ENCODE measurements at regions of chr5 and their contacts with region 1.

Region 1: GRCh38 chr5:149485655-149486425 is 65.4 kb downstream of the CSNK1A1 start:
- DNase-seq: peak; percentile 100
- ATAC-seq: peak; percentile 74
- H3K4me3 ChIP-seq: no peak overlapping the region
- H3K27ac ChIP-seq: peak overlapping the region; percentile 84
- H3K4me1 ChIP-seq: peaks cover 31% of the 10 kb centered on the region
- H3K27me3 ChIP-seq: no peaks in the 10 kb centered on the region
- CTCF ChIP-seq: no peak
- POLR2A ChIP-seq: no peak
- RAD21 ChIP-seq: peak; percentile 8; the same call in 1 of the 2 replicates

Region 2: GRCh38 chr5:149448831-149449714 is 36.8 kb before region 1 on chr5:
- CTCF ChIA-PET with region 1: interaction called, 5 read pairs
- POLR2A ChIA-PET with region 1: interaction called, 3 read pairs
- dilution Hi-C with region 1: no loop called
- in situ Hi-C with region 1: loop called (anchors 5 kb)
- intact Hi-C with region 1: loop called (anchors 1 kb)
- DNase-seq: no peak
- ATAC-seq: no peak
- H3K4me3 ChIP-seq: no peak overlapping the region
- H3K27ac ChIP-seq: peak overlapping the region; percentile 90
- H3K4me1 ChIP-seq: peaks cover 41% of the 10 kb centered on the region
- H3K27me3 ChIP-seq: no peaks in the 10 kb centered on the region
- CTCF ChIP-seq: peak; percentile 55
- POLR2A ChIP-seq: no peak
- RAD21 ChIP-seq: peak; percentile 50

Region 3: GRCh38 chr5:149860801-149861322 is 375.0 kb after region 1 on chr5:
- CTCF ChIA-PET with region 1: no interaction called
- POLR2A ChIA-PET with region 1: no interaction called
- dilution Hi-C with region 1: no loop called
- in situ Hi-C with region 1: no loop called
- intact Hi-C with region 1: no loop called
- DNase-seq: no peak
- ATAC-seq: no peak
- H3K4me3 ChIP-seq: no peak overlapping the region
- H3K27ac ChIP-seq: no peak overlapping the region
- H3K4me1 ChIP-seq: no peaks in the 10 kb centered on the region
- H3K27me3 ChIP-seq: peaks cover 34% of the 10 kb centered on the region
- CTCF ChIP-seq: no peak
- POLR2A ChIP-seq: no peak
- RAD21 ChIP-seq: no peak